Mammary epithelial cell (primary cell): ENCODE measurements at regions of chr6 and their contacts with region 1.

Region 1: DNA sequence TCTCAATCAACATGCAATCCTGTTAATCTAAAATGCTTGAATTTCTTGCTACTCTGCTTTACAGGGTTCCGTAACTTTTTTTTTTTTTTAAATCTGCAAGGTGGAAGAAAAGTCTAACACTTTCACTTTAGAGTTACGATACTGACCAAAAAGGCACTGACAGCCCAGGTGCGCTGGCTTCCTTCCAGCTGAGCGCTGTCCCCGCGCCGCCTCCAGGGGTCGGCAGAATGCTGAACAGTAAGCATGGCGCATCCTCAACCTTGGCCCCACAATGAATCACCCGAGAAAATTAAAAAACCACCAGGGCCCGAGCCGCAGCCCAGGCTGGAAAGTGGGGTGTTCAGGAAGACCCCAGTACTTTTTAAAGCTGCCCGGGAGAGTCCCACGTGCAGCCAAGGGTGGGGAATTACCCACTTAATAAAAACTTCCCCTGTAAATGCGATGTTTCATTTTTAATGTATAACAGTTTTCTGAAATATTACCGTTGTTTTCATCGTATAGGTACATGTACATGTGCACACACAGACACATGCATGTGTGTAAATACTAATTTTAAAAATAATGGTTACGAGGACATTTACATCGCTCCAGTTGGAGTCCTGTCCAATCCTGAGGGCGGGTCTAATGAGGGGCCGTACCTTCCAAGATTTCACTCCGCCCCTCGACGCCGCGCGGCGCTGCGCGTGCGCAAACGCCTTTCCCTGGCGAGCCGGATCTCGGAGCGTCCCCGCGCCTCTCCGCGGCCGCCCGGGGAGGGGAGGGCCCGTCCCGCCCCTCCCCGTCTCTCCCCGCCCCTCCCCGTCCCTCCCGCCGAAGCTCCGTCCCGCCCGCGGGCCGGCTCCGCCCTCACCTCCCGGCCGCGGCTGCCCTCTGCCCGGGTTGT is at the start of gene GINM1:
- DNase-seq: peak; percentile 95
- H3K4me3 ChIP-seq: peak within 1 kb of the TSS; percentile 74 to 95 (median 94)
- H3K27ac ChIP-seq: peak within 1 kb of the TSS; percentile 76
- H3K4me1 ChIP-seq: peaks cover 22% of the 10 kb centered on the region
- H3K27me3 ChIP-seq: no peaks in the 10 kb centered on the region
- CTCF ChIP-seq: peak; percentile 72 to 87
- total RNA-seq, gene GINM1: 33.0 to 34.0 TPM

Region 2: GRCh38 chr6:149545754-149546528 is 19.8 kb before region 1 on chr6 and contains the start of gene PPIL4:
- CTCF ChIA-PET with region 1: interaction called, 8 read pairs
- dilution Hi-C with region 1: no loop called
- in situ Hi-C with region 1: no loop called
- intact Hi-C with region 1: loop called (anchors 1 kb)
- DNase-seq: peak; percentile 94
- H3K4me3 ChIP-seq: peak within 1 kb of the TSS; percentile 89 to 90 (median 90)
- H3K27ac ChIP-seq: peak within 1 kb of the TSS; percentile 97
- H3K4me1 ChIP-seq: peaks cover 4% of the 10 kb centered on the region
- H3K27me3 ChIP-seq: no peaks in the 10 kb centered on the region
- CTCF ChIP-seq: peak; percentile 75 to 88
- total RNA-seq, gene PPIL4: 18.7 to 28.8 TPM

Region 3: GRCh38 chr6:149696901-149697300 is 131.1 kb after region 1 on chr6:
- CTCF ChIA-PET with region 1: no interaction called
- dilution Hi-C with region 1: no loop called
- in situ Hi-C with region 1: no loop called
- intact Hi-C with region 1: loop called (anchors 5 kb)
- DNase-seq: peak; percentile 64
- H3K4me3 ChIP-seq: no peak overlapping the region
- H3K27ac ChIP-seq: no peak overlapping the region
- H3K4me1 ChIP-seq: peaks cover 14% of the 10 kb centered on the region
- H3K27me3 ChIP-seq: no peaks in the 10 kb centered on the region
- CTCF ChIP-seq: no peak

Region 4: DNA sequence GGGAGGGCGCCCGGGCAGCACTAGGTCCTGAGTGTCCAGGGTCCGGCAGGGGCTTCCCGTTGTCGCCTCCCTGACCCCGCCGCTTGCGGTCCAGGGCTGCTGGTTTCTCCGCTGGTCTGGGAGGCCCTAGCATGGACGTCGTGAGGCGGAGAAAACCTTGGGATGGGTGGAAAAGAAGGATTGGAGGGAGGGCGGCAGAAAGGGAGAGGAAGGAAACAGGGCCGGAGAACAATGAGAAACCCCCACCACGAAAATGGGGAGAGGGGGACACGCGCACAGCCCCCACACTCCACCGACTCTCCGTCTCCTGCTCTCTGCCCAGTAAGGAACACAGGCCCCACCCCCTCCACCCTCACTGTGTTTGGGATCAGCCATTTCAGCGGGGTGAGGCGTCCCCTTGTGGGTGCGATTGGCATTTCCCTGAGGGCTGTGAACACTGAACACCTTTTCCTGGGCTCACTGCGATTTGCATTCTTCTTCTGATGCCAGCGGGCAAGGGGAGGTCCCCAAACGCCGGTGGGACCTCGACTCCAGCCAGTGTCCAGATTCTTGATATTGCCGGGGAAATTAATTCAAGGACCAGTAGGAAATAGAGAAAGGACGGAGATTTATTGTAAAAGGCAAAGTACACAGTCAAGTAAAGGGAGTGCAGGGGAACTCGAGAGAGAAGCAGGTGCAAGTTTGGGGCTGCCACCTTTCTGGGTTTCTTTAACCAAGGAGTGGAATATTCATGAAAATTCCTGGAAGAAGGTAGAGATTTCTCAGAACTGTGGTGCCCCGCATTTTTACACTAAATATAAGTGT is 360.4 kb after region 1 on chr6:
- CTCF ChIA-PET with region 1: no interaction called
- dilution Hi-C with region 1: no loop called
- in situ Hi-C with region 1: loop called in 1 of 2 experiments (anchors 25 kb)
- intact Hi-C with region 1: no loop called
- DNase-seq: peak; percentile 75
- H3K4me3 ChIP-seq: peak overlapping the region; percentile 14 to 44 (median 35)
- H3K27ac ChIP-seq: no peak overlapping the region
- H3K4me1 ChIP-seq: peaks cover 18% of the 10 kb centered on the region
- H3K27me3 ChIP-seq: no peaks in the 10 kb centered on the region
- CTCF ChIP-seq: peak; percentile 91 to 97

Region 5: GRCh38 chr6:150928882-150929281 is 1363.1 kb after region 1 on chr6:
- CTCF ChIA-PET with region 1: interaction called, 13 read pairs
- dilution Hi-C with region 1: no loop called
- in situ Hi-C with region 1: no loop called
- intact Hi-C with region 1: no loop called
- DNase-seq: no peak
- H3K4me3 ChIP-seq: no peak overlapping the region
- H3K27ac ChIP-seq: no peak overlapping the region
- H3K4me1 ChIP-seq: no peaks in the 10 kb centered on the region
- H3K27me3 ChIP-seq: no peaks in the 10 kb centered on the region
- CTCF ChIP-seq: peak; percentile 13 to 36